IMR-90 (cell line): ENCODE measurements at regions of chr10 and their contacts with region 1.

Region 1: GRCh38 chr10:91493313-91493712 is 83.2 kb downstream of the HECTD2 start:
- DNase-seq: peak; percentile 63
- ATAC-seq: no peak
- H3K4me3 ChIP-seq: no peak overlapping the region
- H3K27ac ChIP-seq: no peak overlapping the region
- H3K4me1 ChIP-seq: peaks cover 3% of the 10 kb centered on the region; the same call in 1 of the 2 replicates
- H3K27me3 ChIP-seq: no peaks in the 10 kb centered on the region
- CTCF ChIP-seq: peak; percentile 57
- POLR2A ChIP-seq: no peak
- RAD21 ChIP-seq: peak; percentile 54

Region 2: GRCh38 chr10:91694170-91694794 is 201.0 kb after region 1 on chr10:
- CTCF ChIA-PET with region 1: interaction called, 5 read pairs
- POLR2A ChIA-PET with region 1: no interaction called
- dilution Hi-C with region 1: no loop called
- in situ Hi-C with region 1: no loop called
- intact Hi-C with region 1: loop called (anchors 2 kb)
- DNase-seq: peak; percentile 51
- ATAC-seq: peak; percentile 81
- H3K4me3 ChIP-seq: no peak overlapping the region
- H3K27ac ChIP-seq: no peak overlapping the region
- H3K4me1 ChIP-seq: peaks cover 8% of the 10 kb centered on the region
- H3K27me3 ChIP-seq: no peaks in the 10 kb centered on the region
- CTCF ChIP-seq: peak; percentile 82
- POLR2A ChIP-seq: no peak
- RAD21 ChIP-seq: peak; percentile 86